ENCODE measurements at regions of chr19 and their contacts with region 1.

Region 1: DNA sequence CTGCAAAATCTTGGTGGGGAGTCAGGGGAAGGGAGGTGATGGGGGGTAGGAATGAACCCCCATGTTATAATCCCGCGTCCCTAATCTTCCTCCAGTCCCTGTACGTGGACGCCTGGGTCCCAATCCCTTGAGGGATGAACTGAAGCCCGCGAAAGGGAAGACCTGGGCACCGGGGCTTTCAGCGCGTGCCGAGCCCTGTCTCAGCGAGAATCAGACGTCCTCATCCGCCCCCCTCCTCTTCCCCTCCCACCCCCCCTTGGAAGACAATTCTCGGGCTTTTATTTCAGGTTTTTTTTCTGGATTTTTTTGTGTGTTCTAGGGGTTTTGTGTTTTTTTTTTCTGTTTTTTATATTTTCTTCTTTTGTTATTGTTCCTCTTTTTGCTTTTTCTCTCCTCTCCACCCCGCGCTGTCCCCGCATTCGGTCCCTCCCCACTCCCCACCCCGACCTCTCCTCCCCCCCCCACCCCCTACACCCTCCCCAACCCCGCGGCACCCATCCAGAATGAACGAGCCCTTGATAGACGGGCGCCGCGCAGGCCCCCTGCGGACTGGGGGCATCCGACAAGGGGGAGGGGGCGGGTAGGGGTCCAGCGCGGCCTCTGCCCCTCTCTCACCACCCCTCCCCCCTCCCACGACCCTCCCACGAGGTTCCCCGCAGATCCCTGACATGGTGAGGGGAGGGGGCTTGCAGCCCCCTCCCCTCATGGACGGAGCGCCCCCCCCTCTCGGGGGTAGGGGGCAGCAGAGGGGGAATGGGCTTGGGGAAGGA is 10.3 kb downstream of the C19orf81 start:
- H3K4me3 ChIP-seq: peak overlapping the region; percentile 42
- H3K27ac ChIP-seq: no peak overlapping the region
- H3K4me1 ChIP-seq: peaks cover 5% of the 10 kb centered on the region
- CTCF ChIP-seq: no peak

Region 2: GRCh38 chr19:50607874-50608785 is 51.4 kb before region 1 on chr19:
- CTCF ChIA-PET with region 1: no interaction called
- POLR2A ChIA-PET with region 1: interaction called, 12 read pairs
- H3K4me3 ChIP-seq: peak overlapping the region; percentile 21
- H3K27ac ChIP-seq: no peak overlapping the region
- H3K4me1 ChIP-seq: no peaks in the 10 kb centered on the region
- CTCF ChIP-seq: peak; percentile 83

Region 3: DNA sequence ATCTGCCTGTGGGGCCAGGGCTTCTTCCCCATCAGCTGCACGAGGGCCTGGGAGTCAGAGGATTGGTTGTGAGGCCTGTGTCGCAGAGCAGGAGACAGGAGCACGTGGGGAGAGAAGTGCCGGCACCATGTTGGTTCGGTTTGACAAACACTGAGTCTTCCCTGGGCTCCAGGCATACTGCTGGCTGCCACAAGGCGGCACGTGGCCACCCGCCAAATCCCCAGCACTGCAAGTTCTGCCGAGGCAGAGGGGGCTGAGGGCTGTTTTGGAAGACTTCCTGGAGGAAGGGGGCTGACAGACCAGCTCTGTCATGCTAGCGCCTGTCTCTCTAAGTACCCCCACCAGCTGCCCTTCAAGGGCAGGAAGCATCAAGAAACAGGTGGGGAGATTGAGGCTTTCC is 50.6 kb after region 1 on chr19:
- CTCF ChIA-PET with region 1: no interaction called
- POLR2A ChIA-PET with region 1: no interaction called
- H3K4me3 ChIP-seq: no peak overlapping the region
- H3K27ac ChIP-seq: no peak overlapping the region
- H3K4me1 ChIP-seq: no peaks in the 10 kb centered on the region
- CTCF ChIP-seq: no peak